ENCODE measurements at regions of chr13 and their contacts with region 1.

Region 1: DNA sequence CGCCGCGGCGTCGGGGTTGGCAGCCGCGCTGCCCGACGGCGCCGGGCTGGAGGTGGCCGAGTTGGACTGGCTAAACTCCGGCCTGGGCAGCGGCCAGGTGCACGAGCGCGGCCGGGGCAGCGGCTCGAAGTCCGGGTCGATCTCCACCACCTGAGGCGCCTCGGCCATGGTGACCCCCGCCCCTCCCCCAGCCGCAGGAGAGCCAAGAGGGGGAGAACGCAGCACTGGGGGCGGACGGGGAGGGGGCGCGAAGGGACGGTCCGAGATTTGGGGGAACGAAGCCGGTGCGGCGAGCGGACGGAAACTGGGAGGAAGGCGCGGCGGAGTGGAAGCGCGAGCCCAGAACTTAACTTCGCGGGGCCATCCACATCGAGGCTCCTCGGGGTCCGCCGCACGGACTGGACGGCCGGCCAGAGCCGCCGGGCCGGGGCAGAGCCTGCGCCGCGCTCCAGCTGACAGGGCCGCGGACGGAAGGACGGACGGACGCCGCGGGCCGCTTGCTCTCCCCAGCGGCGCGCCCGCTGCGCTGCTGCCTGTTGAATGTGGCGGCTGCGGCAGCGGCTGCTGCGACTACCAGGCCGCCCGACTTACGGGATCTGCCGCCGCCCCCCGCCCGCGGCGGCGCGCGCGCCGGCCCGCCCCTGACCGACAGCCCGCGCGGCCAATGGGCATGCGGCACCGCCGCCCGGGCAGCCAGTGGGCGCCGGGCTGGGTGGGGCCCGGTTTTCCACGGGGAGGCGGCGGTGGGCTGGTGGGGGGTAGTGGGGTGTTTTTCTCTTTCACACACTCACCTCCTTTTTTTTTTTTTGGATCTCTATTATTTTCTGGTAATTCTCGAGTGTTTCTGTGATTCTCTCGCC is at the start of gene FOXO1:
- DNase-seq: peak; percentile 89 to 95 (median 94)
- H3K4me3 ChIP-seq: peak within 1 kb of the TSS; percentile 61 to 92
- H3K4me3 Mint-ChIP-seq: peak within 1 kb of the TSS; percentile 91 to 97 (median 94)
- H3K27ac ChIP-seq: peak within 1 kb of the TSS; percentile 86
- H3K27ac Mint-ChIP-seq: peak within 1 kb of the TSS; percentile 92 to 97 (median 94)
- H3K4me1 ChIP-seq: peaks cover 31% of the 10 kb centered on the region
- H3K4me1 Mint-ChIP-seq: peaks cover 22 to 45% (median 30%) of the 10 kb centered on the region in 4 donors
- H3K27me3 ChIP-seq: no peaks in the 10 kb centered on the region
- H3K27me3 Mint-ChIP-seq: no peaks in the 10 kb centered on the region
- total RNA-seq, gene FOXO1: 68.0 to 68.4 TPM

Region 2: DNA sequence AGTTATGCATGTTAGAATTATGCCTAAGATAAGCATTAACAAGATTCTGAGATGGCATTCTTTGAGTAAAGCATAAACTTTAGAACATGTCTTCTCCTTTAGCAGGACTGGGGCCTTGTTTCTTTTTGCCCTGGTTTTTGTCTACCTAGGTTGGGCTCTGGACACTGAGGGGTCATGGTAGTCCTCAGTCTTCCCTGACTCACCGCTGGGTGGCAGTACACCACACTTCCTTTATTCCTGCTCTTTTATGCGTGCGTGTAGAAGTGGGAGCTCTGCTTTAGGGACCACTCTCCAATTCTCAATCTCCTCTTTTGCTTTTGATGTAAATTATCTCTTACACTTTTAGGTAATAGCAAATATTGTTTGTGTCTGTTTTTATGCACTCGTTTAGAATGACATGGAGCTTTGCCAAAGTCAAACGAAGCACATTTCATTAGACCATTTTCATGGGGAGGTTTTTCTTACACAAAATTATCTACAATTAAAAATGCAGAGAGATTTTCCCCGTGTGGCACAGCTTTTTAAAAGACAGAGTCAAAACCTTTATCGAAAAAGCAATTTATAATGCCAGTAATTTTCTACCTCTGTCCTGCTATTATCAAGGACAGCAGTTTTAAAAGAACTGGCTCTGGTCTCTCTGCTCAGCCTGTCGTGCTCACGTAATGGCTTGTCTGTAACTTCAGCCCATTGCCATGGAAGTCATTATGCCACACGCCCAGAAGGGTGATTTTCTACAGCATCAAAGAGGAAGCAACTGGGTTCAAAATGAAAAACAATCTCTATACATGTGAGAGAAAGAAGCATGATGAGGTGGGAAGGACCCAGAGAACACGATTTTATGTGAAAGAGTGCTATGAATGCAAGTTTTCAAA is 596.9 kb before region 1 on chr13:
- CTCF ChIA-PET with region 1: interaction called, 20 read pairs
- POLR2A ChIA-PET with region 1: interaction called, 17 read pairs
- intact Hi-C with region 1: loop called (anchors 1 kb)
- DNase-seq: peak; percentile 53 to 71 (median 66)
- H3K4me3 ChIP-seq: no peak overlapping the region
- H3K4me3 Mint-ChIP-seq: peak overlapping the region in 6 of 8 donors; percentile 27 to 67 (median 40)
- H3K27ac ChIP-seq: no peak overlapping the region
- H3K27ac Mint-ChIP-seq: peak overlapping the region in 6 of 7 donors; percentile 6 to 87 (median 72)
- H3K4me1 ChIP-seq: peaks cover 19% of the 10 kb centered on the region
- H3K4me1 Mint-ChIP-seq: peaks cover 11 to 24% (median 16%) of the 10 kb centered on the region in 4 donors
- H3K27me3 ChIP-seq: no peaks in the 10 kb centered on the region
- H3K27me3 Mint-ChIP-seq: no peaks in the 10 kb centered on the region

Region 3: GRCh38 chr13:40388617-40389016 is 277.7 kb before region 1 on chr13:
- CTCF ChIA-PET with region 1: no interaction called
- POLR2A ChIA-PET with region 1: interaction called, 30 read pairs
- intact Hi-C with region 1: loop called (anchors 1 kb)
- DNase-seq: peak; percentile 83 to 93 (median 88)
- H3K4me3 ChIP-seq: peak overlapping the region in 1 of 2 donors; percentile 85
- H3K4me3 Mint-ChIP-seq: peak overlapping the region; percentile 83 to 92 (median 90)
- H3K27ac ChIP-seq: peak overlapping the region; percentile 95
- H3K27ac Mint-ChIP-seq: peak overlapping the region; percentile 89 to 100 (median 99)
- H3K4me1 ChIP-seq: peaks cover 34% of the 10 kb centered on the region
- H3K4me1 Mint-ChIP-seq: peaks cover 31 to 58% (median 39%) of the 10 kb centered on the region in 4 donors
- H3K27me3 ChIP-seq: no peaks in the 10 kb centered on the region
- H3K27me3 Mint-ChIP-seq: no peaks in the 10 kb centered on the region

Region 4: DNA sequence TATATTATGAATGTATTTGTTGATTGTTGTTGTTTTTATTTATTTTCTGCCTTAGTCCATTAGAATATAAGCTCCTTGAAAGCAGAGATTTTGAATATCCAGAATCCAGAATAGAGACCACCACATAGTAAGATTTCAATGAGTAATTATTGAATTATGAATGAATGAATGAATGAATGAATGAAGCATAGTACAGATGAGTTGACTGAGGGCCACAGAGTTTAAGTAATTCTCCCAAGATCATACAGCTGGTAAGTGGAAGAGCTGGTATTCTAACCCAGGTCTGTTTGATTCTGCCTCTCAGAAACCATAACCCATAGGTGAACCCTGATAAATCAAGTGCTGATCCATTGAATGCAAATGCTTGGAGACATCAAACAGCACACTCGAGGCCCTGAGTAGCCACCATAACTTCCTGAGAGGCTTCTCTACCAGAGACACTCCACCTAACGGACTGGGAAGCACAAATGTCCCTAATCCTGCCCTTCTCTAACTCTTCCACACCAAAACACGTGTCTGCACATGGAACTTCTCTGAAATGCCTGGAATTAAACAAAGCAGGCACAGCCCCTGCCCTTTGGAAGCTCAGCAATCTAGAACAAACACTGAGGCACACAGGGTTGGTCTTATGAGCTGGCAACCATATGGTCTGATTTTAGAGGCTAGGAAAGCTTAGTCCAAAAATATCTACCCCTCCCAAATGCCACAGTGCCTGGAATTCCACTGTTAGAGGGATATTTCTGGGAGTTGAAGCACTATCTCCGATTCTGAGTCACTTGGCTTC is 189.9 kb before region 1 on chr13:
- CTCF ChIA-PET with region 1: no interaction called
- POLR2A ChIA-PET with region 1: no interaction called
- intact Hi-C with region 1: no loop called
- DNase-seq: no peak
- H3K4me3 ChIP-seq: no peak overlapping the region
- H3K4me3 Mint-ChIP-seq: no peak overlapping the region
- H3K27ac ChIP-seq: no peak overlapping the region
- H3K27ac Mint-ChIP-seq: peak overlapping the region in 2 of 7 donors; percentile 8 to 15
- H3K4me1 ChIP-seq: peaks cover 13% of the 10 kb centered on the region
- H3K4me1 Mint-ChIP-seq: peaks cover 12 to 23% (median 15%) of the 10 kb centered on the region in 4 donors
- H3K27me3 ChIP-seq: no peaks in the 10 kb centered on the region
- H3K27me3 Mint-ChIP-seq: no peaks in the 10 kb centered on the region

Region 5: DNA sequence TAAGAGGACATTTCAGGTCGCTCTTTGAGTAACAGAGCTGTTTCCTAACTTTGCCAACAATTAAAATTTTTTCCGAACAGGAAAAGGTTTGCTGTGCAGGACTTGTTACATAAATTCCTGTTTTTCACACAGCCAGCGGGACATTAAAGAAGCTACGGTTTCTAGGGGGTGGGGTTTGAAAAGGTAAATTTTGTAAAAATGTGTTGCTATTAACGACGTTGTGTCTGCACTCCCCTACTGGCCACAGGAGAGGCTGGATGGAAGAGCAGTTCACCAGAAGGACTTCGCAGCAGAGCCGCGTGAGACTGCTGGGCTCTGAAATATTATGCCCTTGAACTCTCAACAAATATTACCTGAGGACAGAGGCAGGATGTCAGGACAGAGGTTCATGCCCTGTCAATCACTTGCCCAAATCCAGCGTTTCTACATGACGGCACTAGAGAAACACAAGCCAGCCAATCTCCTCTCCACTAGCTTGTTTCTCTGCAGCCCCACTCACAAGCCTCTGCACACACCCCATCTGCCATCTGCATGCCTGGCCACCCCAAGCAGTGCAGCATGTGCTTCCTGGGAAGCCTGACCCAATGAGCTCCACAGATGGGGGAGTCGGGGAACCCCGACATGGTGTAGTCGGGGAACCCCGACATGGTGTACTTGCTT is 101.8 kb before region 1 on chr13:
- CTCF ChIA-PET with region 1: interaction called, 4 read pairs
- POLR2A ChIA-PET with region 1: interaction called, 15 read pairs
- intact Hi-C with region 1: no loop called
- DNase-seq: peak in 1 of 5 donors; percentile 50
- H3K4me3 ChIP-seq: no peak overlapping the region
- H3K4me3 Mint-ChIP-seq: peak overlapping the region in 7 of 8 donors; percentile 14 to 77 (median 60)
- H3K27ac ChIP-seq: no peak overlapping the region
- H3K27ac Mint-ChIP-seq: peak overlapping the region; percentile 66 to 89 (median 80)
- H3K4me1 ChIP-seq: peaks cover 79% of the 10 kb centered on the region
- H3K4me1 Mint-ChIP-seq: peaks cover 69 to 95% (median 81%) of the 10 kb centered on the region in 4 donors
- H3K27me3 ChIP-seq: no peaks in the 10 kb centered on the region
- H3K27me3 Mint-ChIP-seq: no peaks in the 10 kb centered on the region

Region 6: GRCh38 chr13:40640845-40641458 is 25.3 kb before region 1 on chr13:
- CTCF ChIA-PET with region 1: interaction called, 4 read pairs
- POLR2A ChIA-PET with region 1: interaction called, 15 read pairs
- intact Hi-C with region 1: no loop called
- DNase-seq: peak in 3 of 5 donors; percentile 33 to 61 (median 37)
- H3K4me3 ChIP-seq: no peak overlapping the region
- H3K4me3 Mint-ChIP-seq: peak overlapping the region; percentile 67 to 86 (median 76)
- H3K27ac ChIP-seq: no peak overlapping the region
- H3K27ac Mint-ChIP-seq: peak overlapping the region; percentile 19 to 91 (median 68)
- H3K4me1 ChIP-seq: peaks cover 98% of the 10 kb centered on the region
- H3K4me1 Mint-ChIP-seq: peaks cover 70 to 96% (median 86%) of the 10 kb centered on the region in 4 donors
- H3K27me3 ChIP-seq: no peaks in the 10 kb centered on the region
- H3K27me3 Mint-ChIP-seq: no peaks in the 10 kb centered on the region

Region 7: DNA sequence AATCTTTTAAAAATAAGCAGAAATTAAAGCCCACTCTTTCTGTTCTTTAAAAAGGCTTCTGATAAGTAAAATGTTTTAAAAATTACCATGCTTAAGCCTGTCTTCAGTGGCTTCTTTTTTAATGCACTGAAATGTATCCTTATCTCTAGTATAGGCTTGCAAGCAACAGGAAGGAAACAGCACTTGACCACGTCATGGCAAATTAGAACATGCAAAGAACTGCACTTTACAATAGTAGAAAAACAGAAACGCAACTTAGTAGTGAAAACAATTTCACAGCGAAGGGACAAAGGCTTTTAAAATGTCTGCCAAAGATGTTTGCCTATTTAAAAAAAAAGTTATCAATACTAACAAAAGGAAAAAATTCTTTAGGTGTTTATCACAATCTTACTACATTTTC is 316.5 kb after region 1 on chr13:
- CTCF ChIA-PET with region 1: no interaction called
- POLR2A ChIA-PET with region 1: interaction called, 3 read pairs
- intact Hi-C with region 1: loop called (anchors 10 kb)
- DNase-seq: peak; percentile 78 to 90 (median 84)
- H3K4me3 ChIP-seq: peak overlapping the region; percentile 76 to 90
- H3K4me3 Mint-ChIP-seq: peak overlapping the region; percentile 82 to 98 (median 92)
- H3K27ac ChIP-seq: peak overlapping the region; percentile 82
- H3K27ac Mint-ChIP-seq: peak overlapping the region; percentile 95 to 99 (median 97)
- H3K4me1 ChIP-seq: peaks cover 49% of the 10 kb centered on the region
- H3K4me1 Mint-ChIP-seq: peaks cover 38 to 57% (median 45%) of the 10 kb centered on the region in 4 donors
- H3K27me3 ChIP-seq: no peaks in the 10 kb centered on the region
- H3K27me3 Mint-ChIP-seq: no peaks in the 10 kb centered on the region